IMR-90 (cell line): ENCODE measurements at regions of chr12 and their contacts with region 1.

Region 1: GRCh38 chr12:124036674-124037109 is 63.7 kb downstream of the ZNF664 start:
- DNase-seq: peak; percentile 44
- ATAC-seq: peak; percentile 62
- H3K4me3 ChIP-seq: no peak overlapping the region
- H3K27ac ChIP-seq: no peak overlapping the region
- H3K4me1 ChIP-seq: no peaks in the 10 kb centered on the region
- H3K27me3 ChIP-seq: no peaks in the 10 kb centered on the region
- CTCF ChIP-seq: peak; percentile 96
- POLR2A ChIP-seq: no peak
- RAD21 ChIP-seq: peak; percentile 90

Region 2: DNA sequence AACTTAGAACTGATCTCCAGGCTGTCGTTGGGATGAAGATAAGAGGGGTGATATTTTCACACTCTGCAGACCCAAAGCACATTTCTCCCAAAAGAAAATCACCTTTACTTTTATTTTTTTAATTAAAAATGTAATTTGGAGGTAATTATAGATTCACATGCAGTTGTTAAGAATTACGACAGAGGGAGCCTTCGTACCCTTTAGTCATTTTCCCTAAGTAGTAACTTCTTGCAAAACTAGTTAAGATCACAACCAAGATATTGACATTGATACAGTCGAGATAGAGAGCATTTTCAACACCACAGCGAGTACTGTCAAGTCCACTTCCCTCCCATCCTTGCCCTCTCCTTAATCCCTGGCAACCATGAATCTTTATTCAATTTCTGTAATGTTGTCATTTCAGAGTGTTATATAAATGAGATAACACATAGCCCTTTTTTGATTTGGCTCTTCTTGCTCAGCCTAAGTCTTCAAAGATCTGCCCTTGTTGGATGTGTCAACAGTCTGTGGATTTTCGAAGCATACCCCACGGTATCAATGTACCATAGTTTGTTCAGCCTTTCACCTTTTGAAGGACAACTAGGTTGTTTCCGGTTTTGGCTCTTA is 235.0 kb before region 1 on chr12:
- CTCF ChIA-PET with region 1: no interaction called
- POLR2A ChIA-PET with region 1: no interaction called
- dilution Hi-C with region 1: no loop called
- in situ Hi-C with region 1: no loop called
- intact Hi-C with region 1: loop called (anchors 1 kb)
- DNase-seq: peak; percentile 53
- ATAC-seq: no peak; the same call in 1 of the 2 replicates
- H3K4me3 ChIP-seq: no peak overlapping the region
- H3K27ac ChIP-seq: no peak overlapping the region
- H3K4me1 ChIP-seq: no peaks in the 10 kb centered on the region
- H3K27me3 ChIP-seq: peaks cover 12% of the 10 kb centered on the region
- CTCF ChIP-seq: peak; percentile 65
- POLR2A ChIP-seq: no peak
- RAD21 ChIP-seq: peak; percentile 66

Region 3: GRCh38 chr12:123905319-123905925 is 131.3 kb before region 1 on chr12:
- CTCF ChIA-PET with region 1: no interaction called
- POLR2A ChIA-PET with region 1: no interaction called
- dilution Hi-C with region 1: no loop called
- in situ Hi-C with region 1: no loop called
- intact Hi-C with region 1: loop called (anchors 1 kb)
- DNase-seq: peak; percentile 81
- ATAC-seq: peak; percentile 63
- H3K4me3 ChIP-seq: no peak overlapping the region
- H3K27ac ChIP-seq: no peak overlapping the region
- H3K4me1 ChIP-seq: peaks cover 8% of the 10 kb centered on the region
- H3K27me3 ChIP-seq: no peaks in the 10 kb centered on the region; the same call in 1 of the 2 replicates
- CTCF ChIP-seq: peak; percentile 78
- POLR2A ChIP-seq: no peak
- RAD21 ChIP-seq: peak; percentile 53

Region 4: GRCh38 chr12:123972457-123973401 is 64.0 kb before region 1 on chr12 and contains the starts of genes CCDC92 and ZNF664:
- CTCF ChIA-PET with region 1: no interaction called
- POLR2A ChIA-PET with region 1: no interaction called
- dilution Hi-C with region 1: no loop called
- in situ Hi-C with region 1: no loop called
- intact Hi-C with region 1: loop called (anchors 5 kb)
- DNase-seq: peak; percentile 90
- ATAC-seq: peak; percentile 86
- H3K4me3 ChIP-seq: peak within 1 kb of the TSS; percentile 94
- H3K27ac ChIP-seq: peak within 1 kb of the TSS; percentile 72
- H3K4me1 ChIP-seq: peaks cover 4% of the 10 kb centered on the region
- H3K27me3 ChIP-seq: no peaks in the 10 kb centered on the region
- CTCF ChIP-seq: peak; percentile 49
- POLR2A ChIP-seq: peak; percentile 57; the same call in 1 of the 2 replicates
- RAD21 ChIP-seq: 0 out of 2 replicates have a peak, but pooled peaks have one; percentile 18
- total RNA-seq, gene CCDC92: 5.7 and 8.1 TPM in 2 replicates
- total RNA-seq, gene ZNF664: 32.6 and 36.7 TPM in 2 replicates

Region 5: DNA sequence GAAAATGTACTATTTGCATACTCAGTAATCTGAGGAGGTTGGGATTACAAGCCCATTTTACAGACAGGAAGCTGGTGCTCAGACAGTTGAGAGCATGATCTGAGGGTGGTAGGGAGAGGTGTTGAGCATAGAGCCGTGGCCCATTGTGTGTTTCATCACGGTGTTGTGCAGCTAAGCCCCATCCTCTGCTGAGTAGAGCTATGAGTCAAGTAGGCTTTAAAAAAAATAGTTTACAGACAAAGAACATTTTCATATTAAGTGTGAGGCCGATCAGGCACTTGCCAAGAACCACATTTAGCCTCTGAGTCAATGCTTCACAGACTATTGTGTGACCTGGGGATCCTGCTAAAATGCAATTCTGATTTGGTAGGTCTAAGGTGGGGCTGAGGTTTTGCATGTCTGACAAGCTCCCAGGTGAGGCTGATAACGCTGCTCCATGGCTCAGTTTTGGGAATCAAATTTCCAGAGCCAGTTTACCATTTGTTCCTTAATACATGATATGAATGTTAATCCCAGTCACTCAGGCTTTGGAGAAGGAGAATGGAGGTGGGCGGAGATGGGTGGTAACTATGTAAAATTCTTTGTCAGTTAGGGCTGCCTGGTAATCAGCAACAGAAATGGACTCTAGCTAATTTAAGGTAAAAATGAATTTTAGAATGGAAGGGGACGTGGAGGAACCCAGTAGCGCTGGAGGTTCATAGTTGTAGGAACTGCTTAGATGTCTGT is 41.5 kb before region 1 on chr12:
- CTCF ChIA-PET with region 1: interaction called, 6 read pairs
- POLR2A ChIA-PET with region 1: no interaction called
- dilution Hi-C with region 1: no loop called
- in situ Hi-C with region 1: no loop called
- intact Hi-C with region 1: loop called (anchors 5 kb)
- DNase-seq: peak; percentile 81
- ATAC-seq: peak; percentile 42
- H3K4me3 ChIP-seq: no peak overlapping the region
- H3K27ac ChIP-seq: no peak overlapping the region
- H3K4me1 ChIP-seq: peaks cover 27% of the 10 kb centered on the region
- H3K27me3 ChIP-seq: no peaks in the 10 kb centered on the region
- CTCF ChIP-seq: no peak
- POLR2A ChIP-seq: no peak
- RAD21 ChIP-seq: no peak

Region 6: DNA sequence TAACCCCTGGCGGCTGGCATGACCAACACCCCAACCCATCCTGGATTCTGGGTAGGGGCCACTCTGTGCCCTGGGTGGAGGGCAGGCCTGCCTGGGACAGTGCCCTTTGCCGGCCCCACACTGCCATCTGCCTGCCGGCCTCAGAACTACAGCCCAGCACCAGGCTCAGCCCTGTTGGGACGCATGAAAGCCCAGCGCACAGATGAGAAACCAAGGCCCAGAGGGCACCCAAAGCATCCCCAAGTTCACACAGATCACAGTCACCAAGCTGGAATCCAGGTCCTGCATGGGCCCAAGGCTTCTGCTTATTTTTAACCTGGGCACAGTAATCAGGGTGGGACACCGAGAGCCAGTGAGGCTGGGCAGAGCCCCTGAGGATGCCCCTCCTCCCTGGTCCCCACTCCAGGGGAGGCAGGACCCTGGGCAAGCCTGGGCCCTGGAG is 284.4 kb after region 1 on chr12:
- CTCF ChIA-PET with region 1: interaction called, 6 read pairs
- POLR2A ChIA-PET with region 1: no interaction called
- dilution Hi-C with region 1: no loop called
- in situ Hi-C with region 1: loop called (anchors 5 kb)
- intact Hi-C with region 1: loop called (anchors 1 kb)
- DNase-seq: peak; percentile 39
- ATAC-seq: peak; percentile 93
- H3K4me3 ChIP-seq: no peak overlapping the region
- H3K27ac ChIP-seq: no peak overlapping the region
- H3K4me1 ChIP-seq: no peaks in the 10 kb centered on the region
- H3K27me3 ChIP-seq: peaks cover 19% of the 10 kb centered on the region; the same call in 1 of the 2 replicates
- CTCF ChIP-seq: peak; percentile 82
- POLR2A ChIP-seq: peak; percentile 30; the same call in 1 of the 2 replicates
- RAD21 ChIP-seq: peak; percentile 86

Region 7: DNA sequence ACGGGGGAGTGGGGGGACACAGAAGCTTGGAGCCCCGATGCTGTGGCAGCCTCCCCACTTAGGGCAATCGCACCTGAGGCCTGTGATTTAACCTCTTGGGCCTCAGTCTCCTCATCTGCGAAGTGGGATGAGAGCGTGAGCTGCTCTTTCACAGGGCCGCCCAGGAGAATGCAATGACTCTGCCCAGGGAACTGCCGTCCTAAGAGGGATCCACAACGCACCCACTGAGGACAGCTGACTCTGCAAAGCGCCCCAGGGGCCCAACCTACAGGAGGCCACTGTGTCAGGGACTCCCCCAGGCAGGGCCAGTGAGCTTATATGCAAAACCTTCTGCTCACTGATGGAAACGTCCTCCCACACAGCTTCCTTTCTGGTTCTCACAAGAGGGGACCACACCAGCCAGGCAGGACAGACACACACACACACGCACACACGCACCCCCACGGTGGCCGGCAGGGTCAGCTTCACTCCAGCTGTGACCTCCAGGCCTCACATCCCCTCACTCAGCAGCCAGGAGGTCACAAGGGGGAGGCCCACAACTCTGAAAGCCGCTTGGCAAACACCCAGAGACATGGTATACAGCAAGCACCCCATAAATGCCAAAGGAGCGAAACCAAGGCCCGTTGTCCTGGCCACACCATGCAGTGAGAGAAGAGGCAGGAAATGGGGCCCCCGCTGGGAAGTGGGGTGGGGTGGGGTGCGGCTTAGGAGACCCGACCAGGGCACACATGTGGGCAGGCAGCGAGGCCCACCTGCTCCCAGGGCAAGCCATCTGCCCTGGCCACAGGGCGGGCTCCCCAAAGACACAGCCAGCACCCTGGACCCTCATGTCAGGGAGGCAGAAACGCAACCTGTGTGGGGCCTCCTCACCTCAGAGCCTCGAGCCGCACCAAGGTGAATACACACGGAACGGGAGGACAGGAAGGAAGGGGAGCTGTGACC is 457.4 kb after region 1 on chr12:
- CTCF ChIA-PET with region 1: no interaction called
- POLR2A ChIA-PET with region 1: no interaction called
- dilution Hi-C with region 1: no loop called
- in situ Hi-C with region 1: no loop called
- intact Hi-C with region 1: no loop called
- DNase-seq: no peak
- ATAC-seq: no peak
- H3K4me3 ChIP-seq: no peak overlapping the region
- H3K27ac ChIP-seq: no peak overlapping the region
- H3K4me1 ChIP-seq: peaks cover 19% of the 10 kb centered on the region
- H3K27me3 ChIP-seq: no peaks in the 10 kb centered on the region
- CTCF ChIP-seq: no peak
- POLR2A ChIP-seq: no peak
- RAD21 ChIP-seq: no peak